ENCODE measurements at regions of chr9 and their contacts with region 1.

Region 1: DNA sequence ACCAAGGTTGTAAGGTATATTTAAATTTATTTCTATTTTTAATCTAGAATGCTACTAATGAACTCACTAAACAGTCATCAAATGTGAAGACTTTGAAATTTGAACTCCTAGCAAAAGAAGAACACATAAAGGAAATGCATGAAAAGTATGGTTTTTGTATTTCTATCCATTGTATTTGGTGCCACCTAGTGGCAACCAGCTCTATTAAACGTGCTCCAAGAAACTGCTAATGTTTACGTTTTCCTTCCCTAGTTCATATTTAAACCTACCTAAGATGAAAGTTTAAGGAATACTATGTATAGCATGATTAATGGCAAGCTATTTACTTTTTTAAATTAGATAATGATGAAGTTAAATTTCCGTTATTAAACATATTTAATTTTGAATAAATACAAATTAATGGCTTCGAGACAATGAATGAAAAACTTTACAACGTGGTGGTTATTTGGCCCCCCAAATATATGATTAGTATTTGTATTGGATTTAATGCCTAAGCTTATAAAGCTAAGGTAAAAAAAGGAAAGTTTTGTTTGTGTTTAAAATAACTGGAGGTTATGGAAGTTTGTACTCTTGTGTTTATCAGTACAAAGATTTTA is 115.9 kb upstream of the SH3GL2 start:
- DNase-seq: peak; percentile 69
- ATAC-seq: peak; percentile 33
- H3K4me3 ChIP-seq: no peak overlapping the region
- H3K27ac ChIP-seq: no peak overlapping the region
- H3K4me1 ChIP-seq: no peaks in the 10 kb centered on the region
- H3K27me3 ChIP-seq: no peaks in the 10 kb centered on the region
- CTCF ChIP-seq: peak; percentile 72

Region 2: GRCh38 chr9:17063535-17064135 is 399.3 kb before region 1 on chr9:
- CTCF ChIA-PET with region 1: no interaction called
- POLR2A ChIA-PET with region 1: no interaction called
- intact Hi-C with region 1: loop called (anchors 1 kb)
- DNase-seq: peak; percentile 70
- ATAC-seq: peak; percentile 76
- H3K4me3 ChIP-seq: no peak overlapping the region
- H3K27ac ChIP-seq: no peak overlapping the region
- H3K4me1 ChIP-seq: peaks cover 15% of the 10 kb centered on the region
- H3K27me3 ChIP-seq: no peaks in the 10 kb centered on the region
- CTCF ChIP-seq: peak; percentile 84

Region 3: DNA sequence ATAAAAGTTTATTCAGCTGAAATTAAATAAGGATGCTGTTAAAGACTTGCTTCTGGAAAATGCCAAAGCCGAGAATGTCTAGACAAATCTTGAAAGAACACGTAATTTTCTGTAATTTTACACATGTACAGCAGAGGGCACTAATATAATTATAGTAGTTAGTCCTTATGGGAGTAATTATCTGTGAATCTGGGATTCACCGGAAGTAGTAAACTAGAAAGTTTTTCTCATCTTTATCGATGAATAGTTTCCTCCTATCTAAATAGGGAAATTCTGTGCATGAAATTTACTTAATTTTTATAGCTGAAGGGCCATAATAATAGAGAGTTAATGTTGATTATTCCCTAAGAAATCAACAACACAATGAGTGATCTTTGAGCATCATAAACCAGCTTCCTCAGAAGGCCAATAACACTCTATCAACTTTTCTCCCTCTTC is 346.5 kb before region 1 on chr9:
- CTCF ChIA-PET with region 1: no interaction called
- POLR2A ChIA-PET with region 1: no interaction called
- intact Hi-C with region 1: loop called (anchors 1 kb)
- DNase-seq: peak; percentile 60
- ATAC-seq: no peak
- H3K4me3 ChIP-seq: no peak overlapping the region
- H3K27ac ChIP-seq: no peak overlapping the region
- H3K4me1 ChIP-seq: no peaks in the 10 kb centered on the region
- H3K27me3 ChIP-seq: no peaks in the 10 kb centered on the region
- CTCF ChIP-seq: peak; percentile 64

Region 4: DNA sequence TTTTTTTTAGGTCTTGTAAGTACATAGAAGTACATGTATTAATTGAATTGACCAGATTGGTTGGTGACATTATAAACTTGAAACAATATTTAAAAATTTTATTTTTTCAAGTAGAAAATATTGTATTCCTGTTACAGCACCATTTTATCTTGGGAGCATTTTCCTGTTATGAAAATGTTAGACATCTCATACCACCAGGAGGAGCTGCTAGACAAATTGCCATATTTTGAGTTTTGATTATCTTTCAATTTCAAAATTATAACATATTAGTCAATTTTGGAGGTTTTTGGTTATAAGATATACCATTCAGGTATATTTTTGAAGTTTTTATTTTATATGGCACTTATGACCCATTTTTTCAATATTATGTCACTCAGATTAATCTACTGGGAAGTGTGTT is 243.7 kb before region 1 on chr9:
- CTCF ChIA-PET with region 1: no interaction called
- POLR2A ChIA-PET with region 1: no interaction called
- intact Hi-C with region 1: loop called (anchors 1 kb)
- DNase-seq: peak; percentile 8
- ATAC-seq: no peak
- H3K4me3 ChIP-seq: no peak overlapping the region
- H3K27ac ChIP-seq: no peak overlapping the region
- H3K4me1 ChIP-seq: peaks cover 6% of the 10 kb centered on the region; the same call in 1 of the 2 replicates
- H3K27me3 ChIP-seq: no peaks in the 10 kb centered on the region
- CTCF ChIP-seq: peak; percentile 54